Activated CD4-positive, alpha-beta memory T cell treated with anti-CD3 and anti-CD28 coated beads for 36 hours (primary cell): ENCODE measurements at regions of chr7 and their contacts with region 1.

Region 1: DNA sequence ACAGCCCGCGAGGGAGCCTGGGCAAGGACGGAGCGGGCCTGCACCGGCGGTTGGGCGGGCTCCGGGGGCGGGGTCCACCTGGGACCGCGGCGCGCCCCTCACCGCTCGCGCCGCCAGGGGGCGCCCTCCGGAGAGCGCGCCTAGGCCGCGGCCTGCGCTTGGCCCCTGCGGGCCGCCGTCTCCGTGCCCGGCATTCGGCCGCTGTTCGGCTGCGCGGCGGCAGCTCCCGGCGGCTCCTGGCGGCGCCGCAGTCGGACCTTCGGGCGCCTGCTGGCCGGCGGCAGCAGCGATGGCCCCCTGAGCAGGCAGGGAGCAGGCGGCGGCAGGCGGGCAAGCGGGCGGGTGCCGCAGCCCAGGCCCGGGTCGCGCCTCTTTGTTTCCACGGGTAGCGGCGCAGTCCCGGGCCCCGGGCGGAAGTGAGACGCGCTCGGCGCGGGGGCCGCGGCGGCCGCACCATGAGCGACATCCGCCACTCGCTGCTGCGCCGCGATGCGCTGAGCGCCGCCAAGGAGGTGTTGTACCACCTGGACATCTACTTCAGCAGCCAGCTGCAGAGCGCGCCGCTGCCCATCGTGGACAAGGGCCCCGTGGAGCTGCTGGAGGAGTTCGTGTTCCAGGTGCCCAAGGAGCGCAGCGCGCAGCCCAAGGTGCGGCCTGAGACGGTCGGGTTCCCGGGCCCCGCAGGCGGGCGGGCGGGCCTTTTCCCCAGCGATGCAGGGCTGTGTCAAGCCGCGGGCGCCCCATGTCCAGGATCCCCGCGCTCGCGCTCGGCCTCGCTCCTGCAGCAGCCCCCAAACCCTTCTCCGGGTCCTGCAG is at the start of gene INTS15:
- DNase-seq: peak; percentile 84
- H3K4me3 Mint-ChIP-seq: peak within 1 kb of the TSS; percentile 81
- H3K27ac Mint-ChIP-seq: peak within 1 kb of the TSS; percentile 59
- H3K4me1 Mint-ChIP-seq: peaks cover 16% of the 10 kb centered on the region
- H3K27me3 Mint-ChIP-seq: no peaks in the 10 kb centered on the region
- total RNA-seq, gene INTS15: 25.9 to 27.5 TPM

Region 2: GRCh38 chr7:6516387-6516983 is 73.6 kb before region 1 on chr7:
- CTCF ChIA-PET with region 1: interaction called, 10 read pairs
- POLR2A ChIA-PET with region 1: no interaction called
- intact Hi-C with region 1: no loop called
- DNase-seq: peak; percentile 79
- H3K4me3 Mint-ChIP-seq: peak overlapping the region; percentile 61
- H3K27ac Mint-ChIP-seq: no peak overlapping the region
- H3K4me1 Mint-ChIP-seq: peaks cover 6% of the 10 kb centered on the region
- H3K27me3 Mint-ChIP-seq: no peaks in the 10 kb centered on the region

Region 3: GRCh38 chr7:6577365-6578113 is 12.5 kb before region 1 on chr7 and contains the start of gene ZDHHC4:
- CTCF ChIA-PET with region 1: interaction called, 24 read pairs
- POLR2A ChIA-PET with region 1: interaction called, 6 read pairs
- intact Hi-C with region 1: loop called (anchors 1 kb)
- DNase-seq: peak; percentile 93
- H3K4me3 Mint-ChIP-seq: peak within 1 kb of the TSS; percentile 84
- H3K27ac Mint-ChIP-seq: peak within 1 kb of the TSS; percentile 85
- H3K4me1 Mint-ChIP-seq: peaks cover 16% of the 10 kb centered on the region
- H3K27me3 Mint-ChIP-seq: no peaks in the 10 kb centered on the region
- total RNA-seq, gene ZDHHC4: 31.7 to 44.4 TPM

Region 4: GRCh38 chr7:6637544-6638229 is 47.6 kb after region 1 on chr7:
- CTCF ChIA-PET with region 1: interaction called, 4 read pairs
- POLR2A ChIA-PET with region 1: interaction called, 3 read pairs
- intact Hi-C with region 1: loop called (anchors 1 kb)
- DNase-seq: peak; percentile 64
- H3K4me3 Mint-ChIP-seq: peak overlapping the region; percentile 82
- H3K27ac Mint-ChIP-seq: peak overlapping the region; percentile 77
- H3K4me1 Mint-ChIP-seq: peaks cover 30% of the 10 kb centered on the region
- H3K27me3 Mint-ChIP-seq: no peaks in the 10 kb centered on the region

Region 5: DNA sequence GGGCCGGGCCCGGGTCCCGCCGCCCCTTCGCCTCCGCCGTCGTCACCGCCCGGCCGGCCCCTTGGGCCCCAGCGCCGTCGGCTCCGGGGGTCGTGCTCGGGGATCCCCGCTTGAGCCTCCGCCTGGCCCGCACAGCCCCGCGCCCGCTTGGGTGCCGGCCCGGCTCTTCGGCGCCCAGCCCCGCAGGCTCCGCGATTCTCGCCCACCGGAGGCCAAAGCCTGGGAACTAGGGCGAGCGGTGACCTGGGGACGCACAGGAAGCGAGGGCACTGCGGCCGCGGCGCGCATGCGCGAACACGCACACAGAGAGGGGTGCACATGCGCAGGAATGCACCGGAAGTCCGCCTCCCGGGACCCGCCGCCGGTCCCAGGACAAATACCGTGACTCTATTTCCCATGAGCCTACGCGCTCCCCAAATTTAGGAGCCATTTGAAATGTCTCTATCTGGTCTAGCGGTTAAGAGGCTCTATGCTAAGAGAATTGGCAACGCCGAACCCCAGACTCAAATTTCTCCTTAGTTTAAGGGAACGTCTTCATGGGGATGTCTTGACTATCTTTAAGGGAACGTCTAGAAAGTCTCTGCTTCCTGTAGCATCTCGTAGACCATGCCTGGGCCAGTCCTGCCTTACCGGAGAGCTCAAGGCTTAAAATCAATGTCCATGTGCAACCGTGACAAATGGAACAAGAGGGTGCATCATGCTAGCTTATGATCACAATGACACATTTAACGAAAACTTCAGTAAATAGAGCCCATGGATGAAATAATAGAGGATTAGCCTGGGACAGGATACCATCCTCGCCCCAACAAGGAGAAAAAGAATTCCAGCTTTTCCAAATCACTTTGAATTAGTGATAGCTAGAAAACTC is 116.9 kb after region 1 on chr7 and contains the start of gene ZNF12:
- CTCF ChIA-PET with region 1: no interaction called
- POLR2A ChIA-PET with region 1: no interaction called
- intact Hi-C with region 1: loop called (anchors 10 kb)
- DNase-seq: peak; percentile 98
- H3K4me3 Mint-ChIP-seq: peak within 1 kb of the TSS; percentile 83
- H3K27ac Mint-ChIP-seq: peak within 1 kb of the TSS; percentile 90
- H3K4me1 Mint-ChIP-seq: peaks cover 38% of the 10 kb centered on the region
- H3K27me3 Mint-ChIP-seq: no peaks in the 10 kb centered on the region
- total RNA-seq, gene ZNF12: 14.9 to 15.2 TPM